ENCODE measurements at regions of chr4 and their contacts with region 1.

Region 1: DNA sequence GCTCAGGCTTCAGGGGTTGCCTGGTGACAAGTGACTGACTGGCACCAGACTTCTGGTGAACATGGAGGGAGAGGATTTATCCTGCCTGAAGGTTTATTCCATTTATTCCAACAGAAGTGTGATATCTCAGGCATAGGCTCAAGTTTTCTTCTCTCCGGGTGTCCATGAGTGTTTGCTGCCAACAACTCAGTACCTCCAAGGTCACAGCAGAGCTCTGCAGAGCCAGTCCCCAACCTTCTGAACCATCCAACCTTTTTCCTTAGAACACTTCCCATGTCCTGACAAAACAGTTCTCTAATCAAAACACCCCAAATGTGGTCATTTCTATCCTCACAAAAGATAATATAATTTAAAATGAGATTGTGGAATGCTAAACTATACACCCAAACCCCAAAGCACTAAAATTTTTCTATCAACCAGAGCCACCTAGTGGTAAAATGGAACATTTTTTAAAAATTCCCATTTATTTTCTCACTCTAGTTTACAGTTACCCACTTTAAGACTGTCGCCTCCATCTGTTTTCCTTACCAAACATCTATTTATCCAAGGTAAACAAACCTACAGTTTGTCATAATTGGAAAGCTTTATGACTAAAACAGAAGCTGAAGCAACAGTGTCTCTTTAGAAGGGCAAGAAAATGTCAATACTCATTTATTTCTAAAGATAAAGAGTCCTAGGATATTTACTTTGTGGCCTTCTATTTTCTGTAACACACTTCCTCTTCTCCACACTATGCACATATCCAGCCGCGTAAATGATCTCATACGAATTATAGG is 39.6 kb downstream of the TMEM154 start:
- DNase-seq: peak; percentile 40
- H3K4me3 ChIP-seq: no peak overlapping the region
- H3K27ac ChIP-seq: no peak overlapping the region
- H3K4me1 ChIP-seq: no peaks in the 10 kb centered on the region
- H3K27me3 ChIP-seq: no peaks in the 10 kb centered on the region
- CTCF ChIP-seq: peak; percentile 71

Region 2: DNA sequence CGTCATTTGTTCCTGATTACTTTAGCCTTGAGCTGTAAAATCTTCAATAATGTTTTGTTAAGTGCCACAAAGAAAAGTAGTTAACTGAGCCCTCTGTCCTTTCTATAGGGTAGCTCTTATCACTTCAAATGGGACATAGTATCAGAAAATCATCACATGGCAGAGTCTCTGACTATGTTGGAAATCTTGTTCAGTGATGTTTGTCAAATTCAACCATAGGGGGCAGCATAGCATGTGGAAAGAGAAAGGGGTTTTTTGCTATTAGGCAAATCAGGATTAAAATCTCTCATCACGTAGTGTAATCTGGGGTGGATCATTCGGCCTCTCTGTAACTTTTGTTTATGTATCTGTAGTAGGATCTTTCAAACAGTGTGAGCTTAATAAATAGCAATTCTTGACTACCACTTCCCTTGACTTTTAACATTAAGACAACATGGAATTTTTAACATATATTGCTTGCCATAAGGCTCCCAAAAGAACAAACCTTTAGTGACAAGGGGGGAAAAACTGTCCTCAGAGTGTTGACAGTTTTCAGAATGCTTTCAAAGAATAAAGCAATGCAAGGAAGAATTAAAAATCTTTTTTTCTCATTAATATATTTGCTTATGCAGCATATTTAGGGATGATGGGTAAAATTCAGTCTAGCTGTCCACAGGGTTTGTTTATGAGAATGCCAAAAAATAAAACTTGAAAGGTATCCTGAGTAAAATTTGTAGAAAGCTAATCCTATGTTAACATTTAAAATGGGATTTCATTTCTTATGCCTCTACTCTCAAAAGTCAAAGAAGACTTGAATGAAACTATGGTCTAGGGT is 231.5 kb before region 1 on chr4:
- CTCF ChIA-PET with region 1: no interaction called
- POLR2A ChIA-PET with region 1: no interaction called
- intact Hi-C with region 1: loop called (anchors 5 kb)
- DNase-seq: peak; percentile 71
- H3K4me3 ChIP-seq: no peak overlapping the region
- H3K27ac ChIP-seq: no peak overlapping the region
- H3K4me1 ChIP-seq: peaks cover 10% of the 10 kb centered on the region
- H3K27me3 ChIP-seq: no peaks in the 10 kb centered on the region
- CTCF ChIP-seq: peak; percentile 78

Region 3: DNA sequence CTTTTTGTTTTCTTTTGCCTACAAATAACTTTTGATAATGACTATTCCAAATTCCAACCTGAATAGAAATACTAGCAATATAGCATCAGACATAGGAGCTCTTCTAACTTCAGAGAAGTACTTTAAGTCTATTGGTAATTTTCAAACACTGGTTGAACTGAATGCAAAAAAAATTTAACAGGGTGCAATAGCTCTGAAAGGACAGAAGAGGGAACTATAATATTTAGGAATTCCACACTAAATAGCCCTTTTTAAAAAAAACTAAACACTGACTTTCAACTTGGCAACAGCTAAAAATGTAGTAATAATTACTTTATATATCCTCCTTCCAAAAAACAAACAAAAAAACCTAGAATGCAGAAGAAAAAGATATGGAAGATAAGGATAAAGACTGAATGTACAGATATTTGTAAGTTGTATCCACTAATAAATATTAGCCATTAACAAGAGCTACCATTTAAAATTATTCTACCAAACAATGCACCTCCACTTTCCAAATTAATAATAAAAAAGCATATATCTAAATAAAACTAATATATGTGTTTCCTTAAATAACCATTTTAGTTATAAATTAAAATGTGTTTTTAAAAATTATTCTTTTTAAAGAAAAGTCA is 185.7 kb before region 1 on chr4:
- CTCF ChIA-PET with region 1: interaction called, 9 read pairs
- POLR2A ChIA-PET with region 1: no interaction called
- intact Hi-C with region 1: loop called (anchors 1 kb)
- DNase-seq: peak; percentile 48
- H3K4me3 ChIP-seq: no peak overlapping the region
- H3K27ac ChIP-seq: no peak overlapping the region
- H3K4me1 ChIP-seq: peaks cover 4% of the 10 kb centered on the region
- H3K27me3 ChIP-seq: no peaks in the 10 kb centered on the region
- CTCF ChIP-seq: peak; percentile 77

Region 4: DNA sequence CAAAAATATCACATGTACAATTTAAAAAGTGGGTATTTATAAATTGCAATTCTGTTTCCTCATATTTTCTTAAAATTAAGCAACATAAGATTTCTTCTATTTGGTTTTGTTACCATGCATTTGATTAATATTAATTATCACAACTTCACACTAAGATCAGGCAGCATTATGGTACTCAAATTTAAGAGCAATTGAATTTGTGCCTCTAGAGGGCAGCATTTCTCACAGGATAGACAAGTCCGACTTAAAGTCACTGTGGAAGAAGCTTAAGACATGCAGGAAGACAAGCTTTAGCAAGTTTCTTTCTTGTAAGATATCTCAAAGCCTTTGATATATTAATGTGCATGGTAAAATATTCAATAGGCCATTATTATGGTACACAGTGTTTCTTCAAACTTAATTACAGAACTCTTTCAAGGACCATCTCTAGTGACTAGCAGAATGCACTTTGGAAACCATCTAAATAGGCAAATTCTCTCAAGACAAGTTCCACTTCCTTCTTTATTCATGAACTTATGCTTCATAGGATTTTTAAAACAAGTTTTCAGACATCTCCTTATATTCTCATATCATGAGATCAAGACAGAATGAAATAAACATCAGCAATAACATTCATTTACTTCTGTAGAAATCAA is 139.3 kb before region 1 on chr4:
- CTCF ChIA-PET with region 1: interaction called, 11 read pairs
- POLR2A ChIA-PET with region 1: no interaction called
- intact Hi-C with region 1: loop called (anchors 2 kb)
- DNase-seq: peak; percentile 89
- H3K4me3 ChIP-seq: no peak overlapping the region
- H3K27ac ChIP-seq: no peak overlapping the region
- H3K4me1 ChIP-seq: peaks cover 10% of the 10 kb centered on the region
- H3K27me3 ChIP-seq: no peaks in the 10 kb centered on the region
- CTCF ChIP-seq: peak; percentile 88

Region 5: DNA sequence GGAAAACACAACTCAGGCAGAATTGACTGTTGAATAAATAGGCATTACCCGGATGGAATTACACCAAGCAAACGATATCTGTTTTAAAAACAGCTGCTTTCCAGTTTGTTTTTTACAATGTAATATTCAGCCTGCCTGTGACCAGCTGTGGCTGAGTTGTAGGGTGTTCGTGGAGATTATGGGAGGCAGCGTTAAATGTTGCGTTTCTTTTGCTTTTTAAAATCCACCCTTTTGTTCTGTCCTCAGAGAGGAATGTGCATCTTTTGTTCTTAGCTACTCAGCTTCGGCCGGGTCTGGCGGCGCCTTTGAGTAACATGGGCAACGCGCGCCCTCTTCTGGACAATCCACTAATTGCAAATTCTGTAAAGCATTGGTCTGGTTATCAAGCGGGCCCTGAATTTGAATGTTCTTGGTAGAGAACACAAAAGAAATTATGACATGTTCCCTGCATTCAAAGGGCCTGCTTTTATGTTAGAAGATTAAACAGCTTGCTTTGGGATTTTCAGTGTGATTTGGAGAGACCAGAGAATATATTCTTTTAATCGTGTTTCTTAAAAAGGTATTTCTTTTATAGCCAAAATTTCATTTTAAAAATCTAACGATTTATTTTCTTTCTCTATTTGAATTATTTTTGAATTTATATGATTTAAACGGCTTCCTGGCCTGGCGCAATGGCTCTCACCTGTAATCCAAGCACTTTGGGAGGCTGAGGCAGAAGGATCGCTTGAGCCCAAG is 487.7 kb after region 1 on chr4:
- CTCF ChIA-PET with region 1: no interaction called
- POLR2A ChIA-PET with region 1: no interaction called
- intact Hi-C with region 1: no loop called
- DNase-seq: peak; percentile 93
- H3K4me3 ChIP-seq: no peak overlapping the region
- H3K27ac ChIP-seq: no peak overlapping the region
- H3K4me1 ChIP-seq: no peaks in the 10 kb centered on the region
- H3K27me3 ChIP-seq: no peaks in the 10 kb centered on the region
- CTCF ChIP-seq: peak; percentile 90

Measured in A673 (cell line).